Kidney (tissue), 22 donors: ENCODE measurements at regions of chr11 and their contacts with region 1.

Region 1: GRCh38 chr11:24406389-24406788 is 90.5 kb upstream of the LUZP2 start:
- DNase-seq: no peak
- H3K4me3 ChIP-seq: no peak overlapping the region
- H3K27ac ChIP-seq: no peak overlapping the region
- H3K4me1 ChIP-seq: no peaks in the 10 kb centered on the region
- H3K27me3 ChIP-seq: no peaks in the 10 kb centered on the region
- CTCF ChIP-seq: no peak

Region 2: DNA sequence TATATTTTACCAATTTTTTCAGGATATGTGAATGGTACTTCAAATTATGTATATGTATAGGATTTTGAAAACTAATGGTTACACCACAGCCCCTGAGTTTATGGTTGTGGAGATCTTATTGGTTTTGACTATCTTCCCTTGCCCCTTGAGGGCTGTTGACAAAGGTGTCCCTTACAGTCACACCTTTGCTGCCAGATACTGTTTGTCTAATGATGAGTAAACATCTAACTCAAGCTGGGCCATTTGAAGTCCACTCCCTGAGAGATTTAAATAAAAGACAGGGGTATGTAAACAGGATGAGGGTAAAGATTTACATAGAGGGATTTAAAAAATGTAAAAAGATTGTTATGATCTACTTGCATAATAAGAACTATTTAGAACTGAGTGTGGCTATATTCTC is 51.6 kb after region 1 on chr11:
- intact Hi-C with region 1: loop called (anchors 10 kb)
- DNase-seq: no peak
- H3K4me3 ChIP-seq: no peak overlapping the region
- H3K27ac ChIP-seq: no peak overlapping the region
- H3K4me1 ChIP-seq: no peaks in the 10 kb centered on the region
- H3K27me3 ChIP-seq: no peaks in the 10 kb centered on the region
- CTCF ChIP-seq: no peak